A673 (cell line): ENCODE measurements at regions of chr11 and their contacts with region 1.

Region 1: DNA sequence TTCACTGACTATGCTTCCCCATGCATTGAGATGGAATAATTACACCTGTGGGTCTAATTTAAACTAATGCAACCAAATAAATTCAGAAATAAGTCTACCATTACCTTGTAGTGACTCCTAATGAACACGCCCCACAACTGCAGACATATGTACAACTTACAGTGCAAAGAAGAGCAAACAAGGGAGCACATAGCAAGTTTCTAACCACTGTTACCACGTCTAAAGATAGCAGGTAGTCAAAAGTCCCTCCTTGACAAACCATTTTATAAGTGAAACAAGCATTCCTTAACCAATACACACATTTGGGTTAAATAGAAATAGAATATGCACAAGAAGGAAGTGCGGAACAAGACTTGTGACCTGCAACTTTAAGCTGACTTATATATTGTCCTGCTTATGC is 20.6 kb downstream of the PHF21A start:
- DNase-seq: no peak
- H3K4me3 ChIP-seq: no peak overlapping the region
- H3K27ac ChIP-seq: peak overlapping the region; percentile 3
- H3K4me1 ChIP-seq: peaks cover 52% of the 10 kb centered on the region
- H3K27me3 ChIP-seq: no peaks in the 10 kb centered on the region
- CTCF ChIP-seq: no peak

Region 2: GRCh38 chr11:45102810-45103621 is 997.7 kb before region 1 on chr11:
- CTCF ChIA-PET with region 1: no interaction called
- POLR2A ChIA-PET with region 1: no interaction called
- intact Hi-C with region 1: no loop called
- DNase-seq: peak; percentile 85
- H3K4me3 ChIP-seq: no peak overlapping the region
- H3K27ac ChIP-seq: no peak overlapping the region
- H3K4me1 ChIP-seq: no peaks in the 10 kb centered on the region
- H3K27me3 ChIP-seq: peaks cover 26% of the 10 kb centered on the region
- CTCF ChIP-seq: peak; percentile 100

Region 3: DNA sequence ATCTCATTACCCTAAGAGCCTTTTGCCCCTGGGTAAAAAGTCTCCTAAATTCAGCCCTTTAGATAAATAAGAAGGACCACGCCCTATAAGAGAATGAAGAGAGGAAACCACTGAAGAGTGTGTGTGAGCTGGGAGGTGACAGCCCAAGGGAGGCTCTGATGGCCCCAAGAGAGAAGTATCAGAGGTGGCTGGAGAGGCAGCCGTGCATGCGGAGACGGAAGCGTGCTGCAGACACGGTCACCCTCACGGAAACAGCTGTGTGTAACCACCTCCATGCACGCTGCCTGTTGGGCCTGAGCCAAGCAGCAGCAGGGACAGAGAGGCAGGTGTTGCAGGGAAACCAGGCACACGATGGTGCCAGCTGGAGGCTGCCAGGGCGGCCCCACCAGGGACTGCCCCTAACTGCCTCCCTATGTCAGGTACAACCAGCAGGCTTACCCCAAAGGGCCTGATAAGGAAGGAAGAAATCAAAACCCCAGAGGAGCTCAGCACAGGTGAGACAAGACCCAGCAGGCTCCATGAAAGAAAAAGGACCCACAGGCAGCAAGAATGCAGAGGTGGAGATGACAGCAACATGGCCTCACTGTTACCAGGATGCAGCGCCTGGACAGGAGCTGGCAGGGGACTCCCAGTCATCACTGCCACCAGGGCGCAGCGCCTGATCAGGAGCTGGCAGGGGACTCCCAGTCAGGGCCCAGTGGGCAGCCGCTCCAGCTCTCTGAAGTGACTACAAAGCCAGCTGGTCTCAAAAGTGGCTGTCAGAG is 170.5 kb before region 1 on chr11:
- CTCF ChIA-PET with region 1: no interaction called
- POLR2A ChIA-PET with region 1: no interaction called
- intact Hi-C with region 1: no loop called
- DNase-seq: no peak
- H3K4me3 ChIP-seq: no peak overlapping the region
- H3K27ac ChIP-seq: no peak overlapping the region
- H3K4me1 ChIP-seq: no peaks in the 10 kb centered on the region
- H3K27me3 ChIP-seq: no peaks in the 10 kb centered on the region
- CTCF ChIP-seq: 0 out of 2 replicates have a peak, but pooled peaks have one; percentile 10

Region 4: DNA sequence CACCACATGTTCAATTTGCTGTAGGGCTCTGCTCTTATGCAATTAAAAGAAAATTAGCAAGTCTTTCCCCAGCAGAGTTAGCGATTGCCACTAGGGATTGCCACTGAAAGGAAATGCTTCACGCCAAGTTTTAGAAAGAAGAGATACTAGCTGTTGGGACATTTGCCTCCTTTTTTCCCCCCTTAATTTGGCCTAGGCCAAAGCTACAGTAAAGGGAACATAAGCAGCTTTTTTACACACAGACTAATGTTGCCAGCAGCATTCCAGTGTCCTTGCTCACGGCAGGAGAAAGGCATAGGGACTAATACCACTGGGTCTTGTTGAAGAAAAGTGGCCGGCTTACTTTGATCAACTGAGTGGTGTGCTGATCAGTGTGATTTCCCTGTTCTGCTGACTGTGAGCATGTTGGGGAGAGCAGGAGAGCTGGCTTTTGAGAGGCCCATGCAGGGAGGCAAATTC is 50.6 kb before region 1 on chr11:
- CTCF ChIA-PET with region 1: no interaction called
- POLR2A ChIA-PET with region 1: no interaction called
- intact Hi-C with region 1: loop called (anchors 5 kb)
- DNase-seq: peak; percentile 75
- H3K4me3 ChIP-seq: no peak overlapping the region
- H3K27ac ChIP-seq: peak overlapping the region; percentile 69
- H3K4me1 ChIP-seq: peaks cover 33% of the 10 kb centered on the region
- H3K27me3 ChIP-seq: no peaks in the 10 kb centered on the region
- CTCF ChIP-seq: peak; percentile 20; the same call in 1 of the 2 replicates